WTC11 (cell line): ENCODE measurements at regions of chr14 and their contacts with region 1.

Region 1: DNA sequence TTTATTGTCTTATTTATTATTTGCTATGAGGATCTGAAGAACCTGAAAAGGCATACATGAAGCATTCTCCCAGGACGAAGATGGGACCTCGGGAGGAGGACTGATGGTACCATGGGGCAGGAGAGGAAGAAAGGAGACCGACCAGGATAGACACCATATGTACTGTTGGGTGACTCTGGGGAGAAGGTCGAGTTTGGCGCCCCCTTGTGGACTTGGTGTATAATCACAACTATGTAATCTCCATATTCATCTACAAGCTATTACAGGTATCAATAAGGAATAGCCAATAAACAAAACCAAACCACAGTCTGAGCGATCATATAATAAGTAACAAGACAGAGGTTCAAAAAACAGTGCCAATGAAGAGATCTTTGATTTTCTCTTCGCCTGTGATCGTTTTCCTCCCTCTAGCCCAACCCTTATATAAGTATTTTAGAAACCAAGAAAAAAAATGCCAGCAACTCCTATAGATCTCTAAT is 139.1 kb downstream of the SPTSSA start:
- DNase-seq: peak; percentile 70
- ATAC-seq: peak; percentile 77
- H3K4me3 Mint-ChIP-seq: no peak overlapping the region
- H3K27ac Mint-ChIP-seq: no peak overlapping the region
- H3K4me1 Mint-ChIP-seq: peaks cover 3% of the 10 kb centered on the region; the same call in 1 of the 2 replicates
- H3K27me3 Mint-ChIP-seq: no peaks in the 10 kb centered on the region
- CTCF ChIP-seq: peak; percentile 93

Region 2: GRCh38 chr14:34300882-34301734 is 21.9 kb before region 1 on chr14:
- CTCF ChIA-PET with region 1: interaction called, 10 read pairs
- POLR2A ChIA-PET with region 1: no interaction called
- DNase-seq: no peak
- ATAC-seq: peak; percentile 50
- H3K4me3 Mint-ChIP-seq: no peak overlapping the region
- H3K27ac Mint-ChIP-seq: no peak overlapping the region
- H3K4me1 Mint-ChIP-seq: peaks cover 18% of the 10 kb centered on the region
- H3K27me3 Mint-ChIP-seq: peaks cover 29% of the 10 kb centered on the region
- CTCF ChIP-seq: peak; percentile 73